AG04450 (cell line): ENCODE measurements at regions of chr11 and their contacts with region 1.

Region 1: GRCh38 chr11:129750349-129751292 is 65.0 kb upstream of the TMEM45B start:
- DNase-seq: peak; percentile 50
- H3K4me3 ChIP-seq: peak overlapping the region; percentile 34; the same call in 1 of the 2 replicates
- H3K27ac ChIP-seq: no peak overlapping the region
- H3K27me3 ChIP-seq: peaks cover 20% of the 10 kb centered on the region
- CTCF ChIP-seq: peak; percentile 87

Region 2: DNA sequence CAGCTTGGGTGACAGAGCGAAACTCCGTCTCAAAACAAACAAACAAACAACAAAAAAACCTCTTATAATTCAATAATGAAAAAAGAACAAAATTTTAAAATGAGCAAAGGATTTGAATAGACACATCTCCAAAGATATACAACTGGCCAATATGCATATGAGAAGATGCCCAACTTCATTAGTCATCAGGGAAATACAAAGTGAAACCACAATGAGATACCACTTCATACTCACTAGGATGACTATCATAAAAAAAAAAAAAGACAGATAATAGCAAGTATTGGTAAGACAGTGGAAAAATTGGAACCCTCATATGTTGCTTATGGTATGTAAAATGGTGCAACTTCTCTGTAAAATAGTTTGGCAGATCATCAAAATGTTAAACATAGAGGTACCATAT is 403.7 kb before region 1 on chr11:
- CTCF ChIA-PET with region 1: interaction called, 12 read pairs
- POLR2A ChIA-PET with region 1: no interaction called
- DNase-seq: no peak
- H3K4me3 ChIP-seq: no peak overlapping the region
- H3K27ac ChIP-seq: no peak overlapping the region
- H3K27me3 ChIP-seq: peaks cover 1% of the 10 kb centered on the region
- CTCF ChIP-seq: no peak

Region 3: GRCh38 chr11:129375751-129376657 is 374.6 kb before region 1 on chr11 and contains the start of gene BARX2:
- CTCF ChIA-PET with region 1: interaction called, 18 read pairs
- POLR2A ChIA-PET with region 1: no interaction called
- DNase-seq: peak; percentile 11
- H3K4me3 ChIP-seq: 0 out of 2 replicates have a peak within 1 kb of the TSS, but pooled peaks have one; percentile 3
- H3K27ac ChIP-seq: no peak within 1 kb of the TSS
- H3K27me3 ChIP-seq: peaks cover 60% of the 10 kb centered on the region
- CTCF ChIP-seq: peak; percentile 53
- polyA plus RNA-seq, gene BARX2: not detected in 2 replicates

Region 4: DNA sequence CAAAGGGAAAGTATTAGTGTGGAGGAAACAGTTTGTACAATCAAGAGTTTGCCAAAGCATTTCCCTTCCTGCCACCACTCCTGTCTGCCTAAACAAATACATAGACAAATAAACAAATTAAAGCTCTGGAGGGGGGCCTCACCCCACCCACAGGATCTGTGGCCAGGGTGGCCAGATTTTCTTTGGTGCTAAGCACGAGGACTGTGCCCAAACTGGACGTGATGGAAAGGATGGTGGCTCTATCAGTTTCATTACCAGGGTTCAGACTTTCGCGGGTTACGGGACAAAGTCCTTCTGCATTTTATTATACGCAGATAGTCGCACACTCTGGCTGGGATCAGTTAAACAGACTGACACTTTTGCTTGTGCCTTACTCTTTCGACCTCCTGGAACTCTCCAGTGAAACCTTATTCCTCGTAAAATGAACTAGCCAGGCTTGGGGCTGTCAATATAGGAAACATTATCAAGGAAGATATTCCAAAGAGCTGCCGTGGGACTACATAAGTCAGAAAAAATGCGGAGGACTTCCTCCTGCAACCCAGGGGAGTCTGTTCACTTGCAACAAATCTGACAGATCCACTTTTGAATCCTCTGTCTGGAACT is 363.7 kb before region 1 on chr11:
- CTCF ChIA-PET with region 1: interaction called, 10 read pairs
- POLR2A ChIA-PET with region 1: no interaction called
- DNase-seq: no peak
- H3K4me3 ChIP-seq: no peak overlapping the region
- H3K27ac ChIP-seq: no peak overlapping the region
- H3K27me3 ChIP-seq: peaks cover 9% of the 10 kb centered on the region
- CTCF ChIP-seq: no peak